ENCODE measurements at regions of chr6 and their contacts with region 1.

Region 1: DNA sequence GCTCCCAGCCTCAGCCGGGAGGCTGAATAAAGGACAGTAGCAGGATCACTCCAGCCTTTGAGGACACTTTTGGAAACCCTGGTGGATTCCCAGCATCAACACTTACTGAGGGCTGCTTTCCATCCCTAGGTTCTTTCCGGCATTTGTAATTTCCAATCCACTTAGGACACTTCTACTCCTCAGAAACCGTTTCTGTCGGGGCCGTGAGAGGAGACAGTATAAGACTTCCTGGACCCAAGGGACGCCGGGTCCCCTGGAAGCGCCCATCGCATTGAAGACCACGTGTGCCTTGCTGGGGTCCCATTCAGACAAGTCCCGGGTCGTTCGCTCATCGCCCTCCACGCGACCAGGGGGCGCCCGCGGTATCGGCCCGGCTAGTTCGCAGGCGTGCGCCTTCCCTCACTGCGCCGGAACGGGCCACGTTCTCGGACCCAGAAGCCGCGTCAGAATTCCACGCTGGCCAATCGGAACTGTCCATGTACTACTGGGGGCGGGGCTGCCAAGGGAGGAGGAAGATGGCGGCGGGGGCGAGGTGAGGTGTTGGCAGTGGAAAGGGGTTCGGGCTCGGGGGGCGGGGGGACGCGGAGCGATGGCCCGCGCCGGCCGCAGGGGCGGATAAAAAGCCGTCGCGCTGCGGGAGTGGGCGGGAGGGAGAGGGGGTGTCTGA is at the start of gene NUS1:
- DNase-seq: peak in 1 of 2 donors; percentile 97
- H3K4me3 ChIP-seq: peak within 1 kb of the TSS; percentile 72 to 77
- H3K27ac ChIP-seq: peak within 1 kb of the TSS; percentile 82
- H3K4me1 ChIP-seq: peaks cover 50% of the 10 kb centered on the region
- H3K27me3 ChIP-seq: no peaks in the 10 kb centered on the region
- CTCF ChIP-seq: peak; percentile 52 to 56 (median 55)
- POLR2A ChIP-seq: peak in 1 of 2 donors; percentile 24
- total RNA-seq, gene NUS1: 17.7 TPM

Region 2: GRCh38 chr6:117389227-117390057 is 285.7 kb before region 1 on chr6:
- intact Hi-C with region 1: no loop called
- DNase-seq: no peak
- H3K4me3 ChIP-seq: no peak overlapping the region
- H3K27ac ChIP-seq: no peak overlapping the region
- H3K4me1 ChIP-seq: no peaks in the 10 kb centered on the region
- H3K27me3 ChIP-seq: no peaks in the 10 kb centered on the region
- CTCF ChIP-seq: no peak
- POLR2A ChIP-seq: no peak

Region 3: DNA sequence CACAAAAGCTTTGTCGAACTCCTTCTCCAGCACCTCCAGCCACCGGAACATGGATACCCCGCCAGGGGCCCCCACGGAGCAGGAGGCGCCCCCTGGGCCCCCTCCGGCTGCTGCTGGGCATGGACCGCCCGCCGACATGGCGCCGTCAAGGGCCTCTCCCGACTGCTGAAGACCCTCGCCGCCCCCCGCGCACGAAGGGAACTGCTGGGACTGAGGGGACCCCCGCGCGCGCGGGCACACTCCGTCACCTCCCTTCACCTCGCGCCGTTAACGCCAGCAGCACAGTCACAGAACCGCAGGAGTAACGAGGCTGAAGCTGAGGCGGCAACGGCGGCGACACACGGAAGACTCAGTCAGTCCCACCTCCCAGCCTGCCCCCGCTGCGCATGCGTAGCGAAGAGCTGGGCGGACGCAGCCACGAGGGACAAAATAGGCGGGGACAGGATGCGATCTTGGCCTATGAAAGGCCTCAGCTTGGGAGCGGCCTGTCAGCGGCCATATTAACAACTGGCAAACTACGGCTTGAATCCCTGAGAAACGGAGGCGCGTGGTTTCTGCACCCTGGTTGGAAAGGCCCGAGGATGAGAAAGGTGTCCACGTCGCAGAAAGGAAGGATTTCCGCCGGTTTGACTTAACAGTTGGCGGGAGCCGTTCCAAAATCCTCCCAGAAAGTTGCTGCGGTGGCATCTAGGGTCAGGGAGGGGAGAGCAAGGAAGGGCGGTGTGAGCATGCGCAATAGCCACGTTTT is 72.8 kb before region 1 on chr6 and contains the start of gene GOPC:
- intact Hi-C with region 1: loop called (anchors 2 kb)
- DNase-seq: peak; percentile 97 to 98
- H3K4me3 ChIP-seq: peak within 1 kb of the TSS; percentile 94 to 99
- H3K27ac ChIP-seq: peak within 1 kb of the TSS; percentile 92
- H3K4me1 ChIP-seq: peaks cover 21% of the 10 kb centered on the region
- H3K27me3 ChIP-seq: no peaks in the 10 kb centered on the region
- CTCF ChIP-seq: peak in 1 of 3 experiments; percentile 46
- POLR2A ChIP-seq: peak in 1 of 2 donors; percentile 80
- total RNA-seq, gene GOPC: 19.9 TPM